Mammary epithelial cell (primary cell): ENCODE measurements at regions of chr7 and their contacts with region 1.

Region 1: DNA sequence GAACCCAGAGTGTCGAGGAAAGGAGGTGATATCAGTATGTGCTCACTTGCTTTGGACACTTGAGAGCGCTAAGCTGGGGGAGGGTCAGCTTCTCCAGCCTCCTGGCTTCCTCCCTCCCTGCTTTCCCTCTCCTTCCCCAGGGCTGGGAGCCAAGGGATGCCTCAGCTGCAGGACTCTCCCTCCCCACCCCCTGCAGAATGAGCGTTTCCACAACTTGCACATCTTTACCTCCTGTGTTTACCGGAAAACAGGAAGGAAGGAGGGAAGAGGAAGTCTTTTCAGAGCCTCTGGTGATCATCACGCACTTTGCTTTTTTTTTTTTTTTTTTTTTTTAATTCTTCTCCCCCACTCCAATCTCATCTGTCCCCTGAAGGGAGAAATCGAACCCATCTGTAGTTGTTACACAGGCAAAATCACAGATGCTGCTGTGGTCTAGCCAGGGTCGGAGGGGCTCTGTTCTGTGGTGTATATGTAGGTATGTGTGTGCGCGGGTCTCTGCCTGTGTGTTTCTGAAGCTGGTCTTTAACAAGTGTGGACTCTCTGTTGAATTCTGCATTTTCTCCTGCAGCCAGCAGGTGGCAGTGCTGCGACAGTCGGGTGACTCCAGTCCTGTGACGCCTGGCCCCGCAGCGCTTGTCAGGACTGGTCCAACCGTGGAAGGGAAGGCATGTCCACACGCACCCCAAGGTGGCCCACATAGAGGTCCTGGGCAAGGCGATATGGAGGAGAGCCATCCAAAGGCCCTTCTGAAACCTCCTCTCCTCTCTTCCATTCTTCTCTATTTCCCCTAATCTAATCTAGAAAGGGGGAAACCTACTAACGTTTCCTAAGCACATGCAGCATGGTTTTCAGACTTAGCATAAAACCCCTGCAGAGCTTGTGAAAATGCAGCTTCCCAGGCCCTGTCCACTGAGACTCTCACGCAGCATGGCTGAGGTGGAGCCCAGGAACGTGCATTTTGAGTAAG is 257.6 kb downstream of the PLXNA4 start:
- DNase-seq: peak; percentile 61
- H3K4me3 ChIP-seq: no peak overlapping the region
- H3K27ac ChIP-seq: no peak overlapping the region
- H3K4me1 ChIP-seq: peaks cover 3% of the 10 kb centered on the region
- H3K27me3 ChIP-seq: no peaks in the 10 kb centered on the region
- CTCF ChIP-seq: peak; percentile 87 to 88

Region 2: GRCh38 chr7:131688738-131689661 is 629.6 kb before region 1 on chr7:
- CTCF ChIA-PET with region 1: no interaction called
- dilution Hi-C with region 1: no loop called
- in situ Hi-C with region 1: no loop called
- intact Hi-C with region 1: loop called (anchors 10 kb)
- DNase-seq: peak; percentile 31
- H3K4me3 ChIP-seq: no peak overlapping the region
- H3K27ac ChIP-seq: no peak overlapping the region
- H3K4me1 ChIP-seq: peaks cover 3% of the 10 kb centered on the region
- H3K27me3 ChIP-seq: no peaks in the 10 kb centered on the region
- CTCF ChIP-seq: peak; percentile 96

Region 3: GRCh38 chr7:132279718-132280117 is 38.9 kb before region 1 on chr7:
- CTCF ChIA-PET with region 1: no interaction called
- dilution Hi-C with region 1: loop called (anchors 5 kb)
- in situ Hi-C with region 1: no loop called
- intact Hi-C with region 1: no loop called
- DNase-seq: no peak
- H3K4me3 ChIP-seq: no peak overlapping the region
- H3K27ac ChIP-seq: no peak overlapping the region
- H3K4me1 ChIP-seq: no peaks in the 10 kb centered on the region
- H3K27me3 ChIP-seq: no peaks in the 10 kb centered on the region
- CTCF ChIP-seq: no peak

Region 4: GRCh38 chr7:133230591-133231194 is 912.1 kb after region 1 on chr7:
- CTCF ChIA-PET with region 1: no interaction called
- dilution Hi-C with region 1: no loop called
- in situ Hi-C with region 1: no loop called
- intact Hi-C with region 1: loop called (anchors 10 kb)
- DNase-seq: peak; percentile 32
- H3K4me3 ChIP-seq: no peak overlapping the region
- H3K27ac ChIP-seq: no peak overlapping the region
- H3K4me1 ChIP-seq: no peaks in the 10 kb centered on the region
- H3K27me3 ChIP-seq: no peaks in the 10 kb centered on the region
- CTCF ChIP-seq: peak; percentile 74 to 85